HEK293T (cell line): ENCODE measurements at regions of chr16 and their contacts with region 1.

Region 1: DNA sequence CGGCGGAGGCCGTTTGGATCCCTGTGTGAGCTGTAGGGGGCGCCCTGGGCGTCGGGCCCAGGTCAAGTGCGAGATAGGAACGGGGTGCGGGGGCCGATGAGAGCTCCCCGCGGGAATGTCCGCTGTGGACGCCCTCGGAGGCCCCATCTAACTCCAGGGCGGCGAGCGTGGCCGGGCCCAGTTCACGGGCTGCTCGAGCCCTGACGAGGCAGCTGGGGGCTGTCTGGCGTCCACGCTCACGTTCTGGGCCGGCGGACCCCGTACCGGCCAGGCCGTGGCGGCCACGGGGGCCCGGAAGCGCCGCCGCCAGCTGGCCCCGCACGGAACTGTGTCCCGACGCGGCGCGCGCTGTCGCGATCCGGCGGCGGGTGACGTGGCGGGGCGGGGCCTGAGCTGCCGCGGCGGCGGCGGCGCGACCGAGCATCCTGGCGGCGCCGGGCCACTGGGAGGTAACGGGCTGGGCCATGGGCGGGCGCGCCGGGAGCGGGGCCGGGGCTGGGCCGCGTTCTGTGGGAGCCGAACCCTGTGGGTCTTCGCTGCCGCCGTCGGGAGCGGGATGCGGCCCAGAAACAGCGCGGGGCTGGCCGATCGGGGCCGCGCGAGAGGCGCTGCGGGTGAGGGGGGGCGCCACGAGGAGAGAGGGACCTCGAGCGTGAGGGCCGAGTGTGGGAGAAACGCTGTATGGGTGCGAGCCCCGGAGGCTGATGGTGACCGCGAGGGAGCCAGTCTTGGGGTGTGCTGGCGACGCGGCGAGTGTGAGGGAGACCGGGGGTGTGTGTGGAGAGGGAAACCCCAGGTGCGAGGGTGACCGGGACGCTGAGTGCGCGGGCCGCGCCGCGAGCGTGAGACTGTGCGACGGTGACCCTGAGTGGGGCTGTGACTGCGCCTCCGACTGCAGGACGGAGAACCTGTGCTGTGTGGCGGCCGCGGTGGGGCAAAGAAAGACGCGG is at the start of gene SLC7A6:
- DNase-seq: peak; percentile 79

Region 2: GRCh38 chr16:68116256-68116867 is 148.0 kb before region 1 on chr16:
- CTCF ChIA-PET with region 1: interaction called, 14 read pairs
- POLR2A ChIA-PET with region 1: no interaction called
- DNase-seq: peak; percentile 30

Region 3: GRCh38 chr16:68200088-68200783 is 64.2 kb before region 1 on chr16:
- CTCF ChIA-PET with region 1: no interaction called
- POLR2A ChIA-PET with region 1: no interaction called
- DNase-seq: peak; percentile 15

Region 4: DNA sequence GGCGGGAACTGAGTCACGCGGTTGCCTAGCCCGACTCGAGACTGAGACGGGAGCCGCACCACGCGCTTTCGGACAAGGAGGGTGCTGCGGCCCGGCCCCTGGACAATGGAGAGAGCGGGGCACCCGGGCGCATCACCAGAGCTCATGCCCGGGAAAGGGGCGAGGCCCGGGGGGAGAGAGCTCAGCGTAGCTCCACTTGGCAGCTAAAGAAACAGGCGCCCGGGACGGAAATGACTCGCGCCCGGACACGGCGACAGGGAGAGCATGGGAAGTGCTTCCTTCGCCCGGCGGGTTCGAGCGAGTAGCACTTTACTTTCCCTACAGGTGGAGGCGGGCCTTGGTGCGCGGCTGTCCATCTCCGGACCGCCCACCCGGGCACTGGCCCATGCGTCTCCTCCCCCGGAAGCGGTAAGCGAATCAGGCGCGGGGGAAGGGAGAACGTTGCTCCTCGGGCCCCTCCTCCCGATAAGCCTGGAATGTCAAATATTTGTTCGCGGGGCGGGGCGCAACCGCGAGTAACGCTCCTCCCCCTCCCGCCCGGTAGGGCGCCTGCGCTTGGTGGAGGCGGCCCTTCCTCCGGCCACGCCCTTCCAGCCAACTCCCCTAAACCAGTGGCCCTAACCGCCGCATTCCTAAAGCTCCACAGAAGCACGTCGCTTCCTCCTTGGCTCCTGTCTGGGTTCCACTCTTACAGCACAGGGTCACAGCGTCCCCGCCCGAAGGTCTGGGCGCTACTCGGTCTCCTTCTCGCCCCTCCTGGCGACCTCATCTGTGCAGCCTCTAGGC is 27.0 kb before region 1 on chr16:
- CTCF ChIA-PET with region 1: interaction called, 5 read pairs
- POLR2A ChIA-PET with region 1: interaction called, 11 read pairs
- DNase-seq: peak; percentile 97

Region 5: DNA sequence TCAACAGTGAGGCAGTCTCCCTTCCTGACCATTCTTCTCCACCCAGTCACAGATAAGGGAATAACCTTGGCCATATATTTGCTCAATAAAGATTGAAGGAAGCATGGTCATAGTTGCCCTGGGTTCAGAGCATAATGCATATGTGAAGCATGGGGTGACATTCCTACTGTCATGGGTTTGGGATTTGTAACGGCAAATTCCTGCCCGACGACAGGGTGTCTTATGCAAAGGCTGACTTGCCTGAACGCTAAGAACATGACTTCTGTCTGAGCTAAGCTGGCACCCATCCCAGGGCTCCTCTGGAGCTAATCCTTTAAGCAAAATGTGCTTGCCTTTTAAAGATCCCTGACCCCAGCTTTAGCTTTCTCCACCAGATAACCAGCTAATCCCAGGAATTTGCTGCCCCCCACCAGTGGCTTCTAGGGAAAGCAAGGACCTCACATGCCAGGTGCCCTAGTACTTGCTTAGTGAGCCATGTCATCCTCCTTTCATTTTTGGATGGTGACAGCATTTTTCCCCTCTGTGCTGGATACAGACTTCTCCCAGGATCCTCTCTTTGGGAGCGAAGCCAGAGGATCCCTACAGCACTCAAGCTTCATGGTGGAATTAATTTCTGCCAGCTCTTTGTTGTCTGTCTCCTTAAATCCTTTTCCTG is 34.6 kb after region 1 on chr16:
- CTCF ChIA-PET with region 1: interaction called, 3 read pairs
- POLR2A ChIA-PET with region 1: interaction called, 10 read pairs
- DNase-seq: no peak

Region 6: DNA sequence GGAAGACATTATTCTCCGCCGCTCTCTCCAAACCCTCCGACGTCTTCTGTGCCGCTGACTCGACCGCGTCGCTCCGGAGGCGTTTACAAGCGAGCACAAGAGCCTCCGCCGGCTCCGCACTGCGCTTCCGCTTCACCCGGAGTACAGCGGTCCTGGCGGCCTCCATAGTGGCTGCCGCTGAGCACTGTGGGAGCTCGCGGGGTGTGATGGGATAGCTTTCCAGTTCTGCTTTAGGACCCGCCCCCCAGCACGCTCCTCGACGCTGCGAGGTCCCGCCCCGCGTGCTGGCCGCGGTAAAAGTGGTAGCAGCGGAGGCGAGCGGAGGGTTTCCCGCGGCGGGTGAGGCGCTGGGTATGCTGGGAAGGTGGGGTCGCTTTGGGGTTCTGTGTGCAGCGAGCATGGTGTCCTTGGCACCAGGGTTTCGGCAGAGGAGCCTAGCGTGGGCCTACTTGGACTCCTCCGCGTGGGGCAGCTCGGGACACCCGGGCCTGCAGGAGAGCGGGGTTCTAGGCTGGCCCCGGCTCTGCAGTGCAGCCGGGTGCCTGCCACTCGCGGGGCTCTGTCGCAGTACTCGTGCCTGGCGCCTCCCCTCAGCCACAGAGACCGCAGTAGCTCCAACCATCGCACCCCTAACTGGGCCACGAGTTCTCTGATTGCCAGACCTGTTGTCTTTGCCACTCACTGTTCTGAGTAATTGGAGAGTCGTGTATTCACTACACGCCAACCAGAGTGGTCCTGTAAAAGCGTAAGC is 46.5 kb after region 1 on chr16 and contains the starts of genes PRMT7 and SLC7A6OS:
- CTCF ChIA-PET with region 1: interaction called, 8 read pairs
- POLR2A ChIA-PET with region 1: interaction called, 35 read pairs
- DNase-seq: peak; percentile 95

Region 7: DNA sequence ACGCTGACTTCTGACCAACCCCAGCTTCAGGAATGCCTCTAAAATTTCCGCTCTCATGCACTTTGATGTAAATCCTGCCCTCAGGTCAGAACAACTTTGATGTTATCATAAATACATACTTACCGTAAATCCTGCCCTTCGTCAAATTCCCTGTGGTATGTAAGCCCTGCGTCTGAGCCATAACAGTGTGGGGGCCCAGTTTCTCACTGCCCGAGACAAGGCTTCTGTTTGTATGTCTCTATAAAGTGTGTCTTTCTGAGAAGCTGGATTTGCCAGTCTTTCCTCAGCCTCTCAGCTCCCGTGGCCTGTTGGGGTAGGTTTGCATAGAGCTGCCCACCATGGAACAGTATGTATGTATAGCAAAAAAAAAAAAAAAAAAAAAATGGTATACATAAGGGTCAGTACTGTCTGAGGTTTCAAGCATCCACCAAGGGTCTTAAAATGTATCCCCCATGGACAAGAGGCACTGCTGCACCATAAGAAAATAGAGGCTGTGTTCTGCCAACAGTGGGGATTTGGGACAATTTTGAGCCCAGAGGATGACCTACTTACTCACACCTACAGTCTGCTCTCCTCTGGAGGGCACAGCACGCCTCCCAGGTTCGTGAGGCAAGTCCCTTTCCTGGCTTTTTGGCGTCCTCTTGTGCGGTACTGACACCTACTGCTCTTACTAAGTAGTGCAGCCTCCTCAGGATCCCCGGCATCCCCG is 63.9 kb after region 1 on chr16:
- CTCF ChIA-PET with region 1: interaction called, 28 read pairs
- POLR2A ChIA-PET with region 1: interaction called, 7 read pairs
- DNase-seq: peak; percentile 90

Region 8: DNA sequence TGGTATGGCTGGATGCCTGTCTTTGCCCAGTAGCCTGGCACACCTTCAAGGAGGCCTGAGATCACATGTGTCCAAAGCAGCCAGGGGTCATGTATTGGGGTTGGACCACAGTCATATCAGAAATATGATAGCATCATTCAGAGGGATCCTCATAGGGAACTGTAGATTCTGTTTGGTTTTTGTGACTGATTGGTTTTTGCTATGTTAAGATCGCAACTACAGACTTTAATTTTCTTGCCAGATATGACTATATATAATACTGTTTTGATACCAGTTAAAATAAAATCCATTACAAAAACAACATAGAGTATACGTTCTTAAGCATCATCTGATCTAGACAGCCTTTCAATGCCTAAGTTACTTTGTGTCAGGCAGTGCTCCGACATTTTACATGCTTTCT is 195.7 kb after region 1 on chr16:
- CTCF ChIA-PET with region 1: no interaction called
- POLR2A ChIA-PET with region 1: no interaction called
- DNase-seq: no peak